ENCODE measurements at regions of chr1 and their contacts with region 1.

Region 1: GRCh38 chr1:183404456-183404855 is 13.7 kb downstream of the NMNAT2 start:
- DNase-seq: no peak

Region 2: GRCh38 chr1:182198049-182198501 is 1206.4 kb before region 1 on chr1:
- CTCF ChIA-PET with region 1: interaction called, 10 read pairs
- POLR2A ChIA-PET with region 1: no interaction called
- DNase-seq: peak; percentile 26

Region 3: GRCh38 chr1:183331091-183331742 is 73.2 kb before region 1 on chr1:
- CTCF ChIA-PET with region 1: no interaction called
- POLR2A ChIA-PET with region 1: no interaction called
- DNase-seq: peak; percentile 42

Measured in HEK293T (cell line).